SK-N-SH (cell line): ENCODE measurements at regions of chr2 and their contacts with region 1.

Region 1: GRCh38 chr2:229586746-229587705 is 127.3 kb downstream of the DNER start:
- DNase-seq: peak; percentile 81
- H3K4me3 ChIP-seq: peak overlapping the region in 1 of 2 experiments; percentile 51; a peak in 2 of 4 replicates
- H3K27ac ChIP-seq: no peak overlapping the region
- H3K4me1 ChIP-seq: peaks cover 0 to 8% of the 10 kb centered on the region in 2 experiments; a peak in 1 of 4 replicates
- H3K27me3 ChIP-seq: no peaks in the 10 kb centered on the region
- CTCF ChIP-seq: peak; percentile 93
- EP300 ChIP-seq: no peak
- RAD21 ChIP-seq: peak; percentile 93

Region 2: DNA sequence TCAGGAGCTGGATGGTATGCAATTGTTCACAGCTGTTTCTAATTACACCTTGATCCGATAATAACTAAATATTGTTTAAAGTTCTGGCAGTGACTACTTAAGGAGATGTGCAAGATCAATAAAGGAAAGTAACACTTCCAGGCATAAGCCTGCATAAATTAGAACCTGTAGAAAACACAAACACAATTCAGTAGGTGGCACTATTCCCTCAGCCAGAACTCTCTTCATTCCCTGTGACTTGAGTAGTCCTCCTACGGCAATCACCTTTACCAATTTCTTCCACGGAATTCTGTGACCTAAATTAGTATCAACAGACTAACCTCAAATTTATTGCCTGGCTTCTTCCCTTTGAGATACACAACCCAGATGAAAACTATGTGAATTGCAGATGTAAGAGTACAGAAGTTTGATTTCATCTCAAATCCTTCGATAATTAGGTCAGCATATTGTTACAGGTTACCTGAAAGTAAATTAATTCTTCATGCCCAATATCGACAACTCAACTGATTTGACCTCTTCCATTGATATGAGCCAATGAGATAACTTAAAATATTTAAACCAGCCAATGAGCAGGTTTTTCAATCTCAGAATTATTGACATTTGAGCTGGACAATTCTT is 453.8 kb before region 1 on chr2:
- CTCF ChIA-PET with region 1: interaction called, 30 read pairs
- POLR2A ChIA-PET with region 1: no interaction called
- DNase-seq: peak; percentile 35
- H3K4me3 ChIP-seq: no peak overlapping the region
- H3K27ac ChIP-seq: no peak overlapping the region
- H3K4me1 ChIP-seq: peaks cover 0 to 14% of the 10 kb centered on the region in 2 experiments; a peak in 2 of 4 replicates
- H3K27me3 ChIP-seq: no peaks in the 10 kb centered on the region
- CTCF ChIP-seq: peak; percentile 17; the same call in 1 of the 2 replicates
- EP300 ChIP-seq: no peak
- RAD21 ChIP-seq: peak; percentile 85

Region 3: DNA sequence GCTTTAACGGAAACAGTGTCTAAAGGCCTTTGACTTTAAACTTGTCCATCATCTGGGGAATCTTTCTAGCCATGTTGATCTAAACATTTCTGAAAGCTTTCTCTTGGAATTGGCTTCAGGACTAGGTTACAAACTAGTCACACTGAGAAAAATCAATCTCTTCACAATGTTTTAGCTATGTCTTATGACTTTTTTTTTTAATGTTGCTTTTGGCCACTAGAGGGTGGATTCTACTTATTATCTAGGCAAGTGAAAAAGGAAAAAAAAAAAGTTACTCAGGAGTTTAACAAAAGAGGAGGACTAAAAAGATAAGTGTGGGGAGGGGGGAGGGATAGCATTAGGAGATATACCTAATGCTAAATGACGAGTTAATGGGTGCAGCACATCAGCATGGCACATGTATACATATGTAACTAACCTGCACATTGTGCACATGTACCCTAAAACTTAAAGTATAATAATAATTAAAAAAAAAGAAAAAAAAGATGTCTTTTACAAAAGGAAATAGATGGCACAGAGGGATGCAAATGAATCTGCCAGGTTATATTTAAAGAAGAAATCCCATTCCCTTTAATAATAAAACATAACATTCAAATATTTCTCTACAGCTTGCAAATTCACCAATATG is 155.6 kb before region 1 on chr2:
- CTCF ChIA-PET with region 1: interaction called, 40 read pairs
- POLR2A ChIA-PET with region 1: no interaction called
- DNase-seq: peak; percentile 23
- H3K4me3 ChIP-seq: no peak overlapping the region
- H3K27ac ChIP-seq: no peak overlapping the region
- H3K4me1 ChIP-seq: no peaks in the 10 kb centered on the region
- H3K27me3 ChIP-seq: no peaks in the 10 kb centered on the region
- CTCF ChIP-seq: peak; percentile 76
- EP300 ChIP-seq: no peak
- RAD21 ChIP-seq: peak; percentile 68

Region 4: DNA sequence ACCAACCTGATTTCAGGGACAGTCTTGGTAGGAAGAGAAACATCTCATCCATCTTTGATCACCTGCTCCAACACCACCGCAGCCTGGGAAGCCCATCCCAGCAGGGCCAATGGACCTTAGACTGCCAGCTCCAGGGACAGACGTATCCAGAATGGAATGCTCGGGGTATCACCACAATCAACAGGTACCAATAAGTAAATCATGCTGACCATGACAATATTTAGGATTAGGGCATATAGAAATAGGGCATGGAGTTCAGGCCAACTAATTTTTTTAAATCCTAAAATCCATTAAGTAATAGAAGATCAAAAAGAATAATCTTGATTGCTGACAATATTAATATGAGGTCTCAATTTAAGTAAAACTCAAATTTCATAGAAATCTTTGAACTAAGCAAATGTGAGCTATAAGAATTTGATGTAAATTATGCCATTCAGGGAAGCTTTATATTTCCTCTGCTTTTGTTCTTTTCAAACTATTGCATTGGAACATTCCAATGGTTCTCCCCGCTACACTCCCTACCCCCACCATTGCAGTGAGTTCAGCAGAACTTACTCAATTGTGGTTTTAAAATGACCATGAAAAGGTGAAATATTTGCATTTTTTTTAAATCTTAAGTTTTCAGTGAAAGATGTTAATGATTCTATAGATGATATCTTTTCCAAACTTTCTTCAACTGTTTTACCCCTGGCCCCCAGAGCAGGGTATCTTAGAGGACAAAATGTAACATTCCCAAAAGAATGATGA is 11.3 kb before region 1 on chr2:
- CTCF ChIA-PET with region 1: interaction called, 18 read pairs
- POLR2A ChIA-PET with region 1: no interaction called
- DNase-seq: no peak
- H3K4me3 ChIP-seq: no peak overlapping the region
- H3K27ac ChIP-seq: no peak overlapping the region
- H3K4me1 ChIP-seq: no peaks in the 10 kb centered on the region
- H3K27me3 ChIP-seq: no peaks in the 10 kb centered on the region
- CTCF ChIP-seq: no peak
- EP300 ChIP-seq: no peak
- RAD21 ChIP-seq: no peak

Region 5: GRCh38 chr2:229714736-229715541 is 127.9 kb after region 1 on chr2:
- CTCF ChIA-PET with region 1: interaction called, 15 read pairs
- POLR2A ChIA-PET with region 1: no interaction called
- DNase-seq: peak; percentile 70
- H3K4me3 ChIP-seq: peak overlapping the region; percentile 44 to 57
- H3K27ac ChIP-seq: no peak overlapping the region; a peak in 1 of 4 replicates
- H3K4me1 ChIP-seq: peaks cover 0 to 17% of the 10 kb centered on the region in 2 experiments; a peak in 2 of 4 replicates
- H3K27me3 ChIP-seq: peaks cover 26% of the 10 kb centered on the region; the same call in 1 of the 2 replicates
- CTCF ChIP-seq: no peak
- EP300 ChIP-seq: no peak
- RAD21 ChIP-seq: no peak